A549 (cell line): ENCODE measurements at regions of chr17 and their contacts with region 1.

Region 1: DNA sequence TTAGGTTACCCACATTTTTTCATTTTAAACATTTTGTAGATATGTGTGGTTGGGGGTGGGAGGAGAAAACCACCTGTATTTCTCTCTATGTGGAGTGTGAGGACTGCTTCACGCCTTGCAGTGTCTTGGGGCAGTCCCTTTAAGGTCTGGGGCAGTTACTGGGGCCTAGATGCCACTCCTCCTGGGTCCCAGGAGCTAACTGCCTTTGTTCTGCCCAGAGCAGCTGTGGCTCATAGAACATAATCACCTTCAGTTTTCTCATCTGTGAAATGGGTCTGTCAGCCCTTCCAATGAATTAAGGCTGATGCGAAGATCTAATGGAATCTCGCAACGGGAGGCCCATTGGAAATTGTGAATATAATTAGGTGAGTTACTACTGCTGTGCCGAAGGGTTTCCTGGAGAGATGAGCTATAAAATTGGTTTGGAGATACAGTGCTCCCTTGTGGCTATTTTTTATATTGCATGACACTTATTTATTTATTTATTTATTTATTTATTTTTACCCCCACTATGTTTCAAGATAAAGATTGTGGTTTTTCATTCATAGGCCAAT is 22.9 kb downstream of the DHRS7C start:
- DNase-seq: peak; percentile 55 to 60
- ATAC-seq: peak in 1 of 2 experiments; percentile 52; a peak in 3 of 6 replicates
- H3K4me3 ChIP-seq: no peak overlapping the region
- H3K27ac ChIP-seq: peak overlapping the region; percentile 43 to 72
- H3K4me1 ChIP-seq: peaks cover 14% of the 10 kb centered on the region; the same call in 2 of the 3 replicates
- CTCF ChIP-seq: peak; percentile 80
- EP300 ChIP-seq: no peak
- POLR2A ChIP-seq: no peak
- RAD21 ChIP-seq: peak; percentile 55 to 74

Region 2: GRCh38 chr17:9743096-9743495 is 25.4 kb before region 1 on chr17:
- CTCF ChIA-PET with region 1: interaction called, 10 read pairs
- POLR2A ChIA-PET with region 1: no interaction called
- DNase-seq: no peak
- ATAC-seq: no peak
- H3K4me3 ChIP-seq: no peak overlapping the region
- H3K27ac ChIP-seq: no peak overlapping the region
- H3K4me1 ChIP-seq: no peaks in the 10 kb centered on the region
- CTCF ChIP-seq: no peak
- EP300 ChIP-seq: no peak
- POLR2A ChIP-seq: no peak
- RAD21 ChIP-seq: no peak

Region 3: GRCh38 chr17:9790889-9791876 is 22.7 kb after region 1 on chr17 and contains the start of gene DHRS7C:
- CTCF ChIA-PET with region 1: interaction called, 14 read pairs
- POLR2A ChIA-PET with region 1: no interaction called
- DNase-seq: no peak
- ATAC-seq: no peak
- H3K4me3 ChIP-seq: no peak within 1 kb of the TSS
- H3K27ac ChIP-seq: peak within 1 kb of the TSS in 1 of 2 experiments; percentile 18; a peak in 2 of 6 replicates
- H3K4me1 ChIP-seq: no peaks in the 10 kb centered on the region
- CTCF ChIP-seq: no peak
- EP300 ChIP-seq: no peak
- POLR2A ChIP-seq: no peak
- RAD21 ChIP-seq: no peak
- polyA plus RNA-seq, gene DHRS7C: not detected in 2 replicates